Ascending aorta (tissue), 2 donors: ENCODE measurements at regions of chr19 and their contacts with region 1.

Region 1: GRCh38 chr19:16247353-16248182 is 49.9 kb downstream of the AP1M1 start:
- DNase-seq: peak; percentile 43 to 93
- H3K4me3 ChIP-seq: no peak overlapping the region
- H3K27ac ChIP-seq: no peak overlapping the region
- H3K4me1 ChIP-seq: peaks cover 0 to 5% of the 10 kb centered on the region in 2 donors
- H3K27me3 ChIP-seq: no peaks in the 10 kb centered on the region
- CTCF ChIP-seq: peak; percentile 92 to 99 (median 95)

Region 2: DNA sequence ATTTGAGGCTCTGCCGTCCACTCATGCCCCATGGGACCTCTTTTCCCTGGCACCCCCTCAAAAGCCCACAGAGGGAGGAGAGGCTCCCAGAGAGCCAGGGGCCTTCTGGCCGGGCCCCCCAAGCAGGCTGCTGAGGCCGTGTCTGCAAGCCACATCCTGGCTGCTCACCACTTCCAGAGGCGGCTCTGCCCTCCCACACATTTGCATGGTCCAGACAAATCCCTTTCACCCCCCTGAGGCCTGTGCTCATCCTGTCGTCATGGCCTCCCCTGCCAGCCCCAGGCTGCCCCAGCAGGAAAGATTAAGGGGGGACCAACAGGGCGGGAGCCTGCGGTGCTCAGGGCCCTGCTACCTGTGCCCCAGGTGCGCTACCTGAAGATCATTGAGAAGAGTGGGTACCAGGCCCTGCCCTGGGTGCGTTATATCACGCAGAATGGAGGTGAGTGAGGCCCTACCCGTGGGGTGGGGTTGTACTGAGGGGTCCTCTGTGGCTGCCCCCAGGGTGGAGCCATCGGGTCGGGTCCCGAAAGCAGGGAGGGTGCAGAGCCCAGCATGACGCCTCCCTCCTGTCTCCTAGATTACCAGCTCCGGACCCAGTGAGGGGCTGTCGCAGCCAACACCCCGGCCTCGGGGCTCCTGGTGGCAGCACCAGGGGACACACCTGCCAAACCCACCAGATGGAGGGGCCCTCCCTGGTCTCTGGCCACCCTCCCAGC is 13.6 kb before region 1 on chr19:
- intact Hi-C with region 1: no loop called
- DNase-seq: no peak
- H3K4me3 ChIP-seq: no peak overlapping the region
- H3K27ac ChIP-seq: no peak overlapping the region
- H3K4me1 ChIP-seq: no peaks in the 10 kb centered on the region
- H3K27me3 ChIP-seq: no peaks in the 10 kb centered on the region
- CTCF ChIP-seq: no peak

Region 3: DNA sequence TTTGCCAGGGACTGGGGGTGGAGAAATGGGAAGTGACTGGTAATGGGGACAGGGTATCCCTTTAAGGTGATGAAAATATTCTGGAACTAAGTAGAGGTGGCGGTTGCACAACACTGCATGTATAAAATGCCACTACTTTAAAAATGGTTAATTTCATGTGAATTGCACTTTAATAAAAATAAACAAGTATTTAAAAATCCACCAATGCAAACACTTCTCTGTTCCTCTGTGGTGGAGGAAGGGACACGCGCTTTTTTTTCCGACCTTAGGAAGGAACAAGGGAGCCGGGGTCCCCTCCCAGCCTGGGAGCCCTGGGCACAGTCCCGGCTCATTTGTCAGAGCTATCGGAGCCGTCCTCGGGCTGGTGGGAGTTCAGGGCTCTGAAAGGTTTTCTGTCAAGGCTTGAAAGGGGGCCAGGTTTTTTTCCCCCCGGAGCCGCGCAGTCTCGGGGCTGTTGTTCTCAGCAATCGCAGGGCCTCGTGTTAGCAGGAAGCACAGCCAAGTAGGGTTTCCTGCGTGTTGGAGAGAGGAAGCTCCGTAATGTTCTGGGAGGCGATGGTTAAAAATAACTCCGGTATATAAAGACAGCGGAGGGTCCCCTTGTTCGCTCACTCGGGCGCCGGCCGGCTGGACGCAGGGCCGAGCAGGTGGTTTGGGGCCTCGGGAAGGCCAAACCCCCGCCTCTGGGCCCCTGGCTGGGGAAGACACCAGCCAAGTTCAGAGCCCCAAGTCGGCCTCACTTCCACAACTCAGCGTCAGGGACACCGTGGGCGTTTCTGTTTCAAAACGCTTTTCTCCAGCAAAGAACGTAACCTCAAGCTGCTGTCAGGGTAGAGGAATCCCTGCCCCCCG is 35.9 kb after region 1 on chr19:
- intact Hi-C with region 1: loop called (anchors 5 kb)
- DNase-seq: peak; percentile 80 to 93
- H3K4me3 ChIP-seq: peak overlapping the region; percentile 29 to 57
- H3K27ac ChIP-seq: peak overlapping the region; percentile 95
- H3K4me1 ChIP-seq: peaks cover 23 to 63% of the 10 kb centered on the region in 2 donors
- H3K27me3 ChIP-seq: no peaks in the 10 kb centered on the region
- CTCF ChIP-seq: no peak

Region 4: DNA sequence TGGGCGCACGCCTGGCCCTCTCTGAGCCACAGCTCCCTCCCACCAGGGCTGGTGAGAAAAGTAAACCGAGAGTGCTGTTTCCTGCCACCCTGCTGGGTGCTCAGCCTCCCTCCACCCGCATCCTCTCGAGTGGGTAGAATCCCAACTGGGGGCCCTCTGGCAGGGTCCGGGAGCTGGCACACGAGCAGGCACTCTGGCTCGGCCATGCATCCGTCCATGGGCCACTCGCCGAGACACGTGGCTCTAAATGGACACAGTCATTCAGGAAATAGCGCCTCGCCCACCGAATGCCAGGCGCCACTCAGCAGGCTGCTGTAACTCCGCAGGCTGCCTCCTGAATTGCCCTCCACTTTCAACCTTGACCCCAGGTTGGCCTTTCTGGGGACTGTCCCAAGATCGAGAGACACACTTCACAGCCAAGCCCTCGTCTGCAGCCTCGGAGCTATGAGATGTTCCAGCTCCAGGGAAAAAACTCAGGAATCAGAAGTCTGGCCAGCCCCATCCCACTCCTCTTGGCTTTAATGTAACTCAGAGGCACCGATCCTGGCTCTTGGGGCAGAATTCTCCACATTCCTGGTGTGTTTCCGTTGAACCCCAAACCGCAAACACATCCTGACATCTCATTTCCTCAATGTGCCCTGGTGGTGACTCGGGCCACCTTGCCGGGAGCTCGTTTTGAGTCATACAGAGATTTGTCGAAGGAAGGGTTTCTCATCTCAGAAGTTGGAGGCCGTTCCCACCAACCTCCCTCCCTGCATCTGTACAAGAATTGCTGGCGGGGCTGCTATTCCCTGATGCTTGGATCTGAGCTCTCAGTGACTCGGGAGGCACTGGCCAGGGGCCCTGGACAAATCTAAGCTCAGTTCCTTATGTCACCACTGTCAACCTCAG is 91.1 kb after region 1 on chr19:
- intact Hi-C with region 1: loop called (anchors 5 kb)
- DNase-seq: peak; percentile 46 to 89
- H3K4me3 ChIP-seq: peak overlapping the region in 1 of 2 donors; percentile 15
- H3K27ac ChIP-seq: peak overlapping the region; percentile 69 to 83
- H3K4me1 ChIP-seq: peaks cover 14 to 25% of the 10 kb centered on the region in 2 donors
- H3K27me3 ChIP-seq: no peaks in the 10 kb centered on the region
- CTCF ChIP-seq: peak; percentile 17 to 54 (median 20)

Region 5: DNA sequence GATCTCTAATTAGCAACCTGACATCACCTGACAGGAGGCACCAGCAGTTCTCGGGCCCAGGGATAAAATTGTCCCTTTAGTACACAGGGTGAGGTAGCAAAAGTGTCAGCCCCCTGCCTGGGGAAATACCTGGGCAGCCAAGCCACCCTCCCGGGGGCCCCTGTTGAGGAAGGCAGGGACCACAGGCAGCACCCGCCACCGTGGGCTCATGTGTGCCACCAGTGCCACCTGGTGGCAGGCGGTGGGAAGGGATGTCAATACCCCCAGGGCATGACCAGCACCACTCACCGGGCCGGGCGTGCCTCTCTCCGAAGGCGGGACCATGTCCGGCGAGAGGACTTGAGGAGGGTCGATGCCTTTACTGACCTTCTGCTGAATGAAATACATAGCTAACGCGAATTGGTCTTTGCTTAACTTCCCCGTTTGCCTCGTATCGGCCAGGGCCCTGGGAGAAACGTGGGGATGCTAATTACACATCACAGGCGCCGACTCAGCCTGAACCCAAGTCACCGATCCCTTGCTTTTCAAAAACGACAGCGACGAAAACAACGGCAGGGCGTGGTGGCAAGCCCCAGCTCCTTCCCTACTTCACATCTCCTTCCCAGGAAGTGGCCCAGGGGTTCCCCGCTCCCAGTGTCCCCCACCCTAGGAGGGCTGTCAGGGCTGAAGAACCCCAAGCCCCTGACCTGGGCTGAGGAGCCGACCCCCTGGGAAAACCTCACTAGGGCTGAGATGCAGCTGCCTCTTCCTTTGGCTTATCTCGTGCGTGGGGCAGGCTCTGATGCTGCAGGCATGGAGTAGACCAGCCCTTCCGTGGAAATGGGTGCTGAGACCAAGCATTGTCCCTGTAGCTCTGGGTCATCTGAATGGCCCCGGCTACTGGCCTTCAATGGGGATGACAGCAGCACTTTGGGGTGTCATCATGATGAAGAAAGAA is 170.4 kb after region 1 on chr19:
- intact Hi-C with region 1: loop called (anchors 1 kb)
- DNase-seq: peak in 1 of 2 donors; percentile 82
- H3K4me3 ChIP-seq: no peak overlapping the region
- H3K27ac ChIP-seq: no peak overlapping the region
- H3K4me1 ChIP-seq: no peaks in the 10 kb centered on the region
- H3K27me3 ChIP-seq: no peaks in the 10 kb centered on the region
- CTCF ChIP-seq: peak; percentile 79 to 88 (median 84)

Region 6: GRCh38 chr19:16737911-16738310 is 490.3 kb after region 1 on chr19:
- intact Hi-C with region 1: no loop called
- DNase-seq: no peak
- H3K4me3 ChIP-seq: no peak overlapping the region
- H3K27ac ChIP-seq: no peak overlapping the region
- H3K4me1 ChIP-seq: peaks cover 2 to 5% of the 10 kb centered on the region in 2 donors
- H3K27me3 ChIP-seq: no peaks in the 10 kb centered on the region
- CTCF ChIP-seq: no peak